ENCODE measurements at regions of chr22 and their contacts with region 1.

Region 1: DNA sequence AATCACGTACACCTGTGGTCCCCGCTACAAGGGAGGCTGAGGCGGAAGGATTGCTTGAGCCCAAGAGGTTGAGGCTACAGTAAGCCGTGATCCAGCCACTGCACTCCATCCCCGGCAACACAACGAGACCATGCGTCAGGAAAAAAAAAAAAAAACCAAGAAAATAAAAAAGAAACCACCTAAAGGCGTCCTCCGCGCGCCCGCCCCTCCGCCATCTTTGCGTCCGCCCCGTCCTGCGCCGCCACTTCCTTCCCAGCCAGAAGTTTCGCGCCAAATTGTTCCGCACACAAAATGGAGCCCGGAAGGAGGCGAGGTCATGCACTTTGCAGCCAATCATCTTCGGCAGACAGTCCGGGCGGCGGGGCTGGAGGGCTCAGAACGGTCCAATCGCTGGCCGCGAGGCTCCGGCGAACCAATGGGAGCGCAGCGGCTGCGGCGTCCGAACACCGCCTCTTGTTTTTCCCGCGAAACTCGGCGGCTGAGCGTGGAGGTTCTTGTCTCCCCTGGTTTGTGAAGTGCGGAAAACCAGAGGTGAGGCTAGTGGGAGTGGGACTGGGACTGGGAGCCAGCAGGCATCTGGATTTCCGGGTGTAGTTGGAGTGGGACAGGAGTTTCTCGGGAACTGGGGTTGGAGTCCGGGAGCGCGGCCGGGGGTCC is at the start of gene MCM5:
- DNase-seq: peak; percentile 99
- H3K4me3 ChIP-seq: peak within 1 kb of the TSS; percentile 99
- H3K27ac ChIP-seq: peak within 1 kb of the TSS; percentile 99
- H3K4me1 ChIP-seq: peaks cover 24% of the 10 kb centered on the region
- H3K27me3 ChIP-seq: no peaks in the 10 kb centered on the region
- CTCF ChIP-seq: no peak
- total RNA-seq, gene MCM5: 245 and 261 TPM in 2 replicates

Region 2: DNA sequence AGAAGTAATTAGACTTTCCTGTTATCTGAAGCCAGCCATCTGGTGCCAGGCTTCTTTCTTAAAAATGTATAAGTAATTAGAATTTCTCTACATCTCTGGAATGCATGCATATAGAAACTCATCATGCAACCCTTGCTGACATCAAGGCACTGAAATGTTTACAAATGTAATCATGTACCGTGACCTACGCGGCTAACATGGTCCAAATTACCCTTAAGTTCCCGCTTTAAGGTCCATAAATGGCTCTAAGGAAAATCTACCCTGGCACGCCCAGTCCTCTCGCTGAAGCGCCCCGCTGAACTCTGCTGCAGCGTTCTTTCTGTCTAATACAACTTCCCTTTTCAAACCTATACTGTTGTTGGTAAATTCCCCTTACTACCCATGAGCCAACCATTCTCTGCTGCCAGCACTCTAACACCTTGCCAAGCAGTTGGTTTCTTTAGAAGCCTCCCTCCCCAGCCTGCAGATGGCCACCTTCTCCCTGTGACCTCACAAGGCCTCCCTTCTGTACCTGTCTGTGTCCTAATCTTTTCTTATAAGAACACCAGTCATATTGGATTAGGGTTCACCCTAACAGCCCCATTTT is 32.4 kb before region 1 on chr22:
- CTCF ChIA-PET with region 1: interaction called, 13 read pairs
- POLR2A ChIA-PET with region 1: no interaction called
- intact Hi-C with region 1: no loop called
- DNase-seq: no peak
- H3K4me3 ChIP-seq: no peak overlapping the region
- H3K27ac ChIP-seq: no peak overlapping the region
- H3K4me1 ChIP-seq: peaks cover 13% of the 10 kb centered on the region
- H3K27me3 ChIP-seq: no peaks in the 10 kb centered on the region
- CTCF ChIP-seq: no peak

Region 3: GRCh38 chr22:35477911-35478582 is 78.2 kb after region 1 on chr22:
- CTCF ChIA-PET with region 1: no interaction called
- POLR2A ChIA-PET with region 1: interaction called, 16 read pairs
- intact Hi-C with region 1: no loop called
- DNase-seq: peak; percentile 99
- H3K4me3 ChIP-seq: peak overlapping the region; percentile 24
- H3K27ac ChIP-seq: peak overlapping the region; percentile 80
- H3K4me1 ChIP-seq: peaks cover 72% of the 10 kb centered on the region
- H3K27me3 ChIP-seq: no peaks in the 10 kb centered on the region
- CTCF ChIP-seq: no peak

Measured in A673 (cell line).